ENCODE measurements at regions of chr15 and their contacts with region 1.

Region 1: GRCh38 chr15:74265046-74265639 is 29.0 kb downstream of the CCDC33 start:
- DNase-seq: peak; percentile 27 to 87
- H3K4me3 ChIP-seq: no peak overlapping the region
- H3K27ac ChIP-seq: no peak overlapping the region
- H3K4me1 ChIP-seq: peaks cover 7 to 15% (median 9%) of the 10 kb centered on the region in 4 experiments
- H3K27me3 ChIP-seq: peaks cover 0 to 8% (median 0%) of the 10 kb centered on the region in 4 experiments; a peak in 1 of 7 replicates
- CTCF ChIP-seq: no peak
- EP300 ChIP-seq: no peak
- POLR2A ChIP-seq: no peak
- RAD21 ChIP-seq: peak in 1 of 2 experiments; percentile 9; a peak in 1 of 4 replicates

Region 2: DNA sequence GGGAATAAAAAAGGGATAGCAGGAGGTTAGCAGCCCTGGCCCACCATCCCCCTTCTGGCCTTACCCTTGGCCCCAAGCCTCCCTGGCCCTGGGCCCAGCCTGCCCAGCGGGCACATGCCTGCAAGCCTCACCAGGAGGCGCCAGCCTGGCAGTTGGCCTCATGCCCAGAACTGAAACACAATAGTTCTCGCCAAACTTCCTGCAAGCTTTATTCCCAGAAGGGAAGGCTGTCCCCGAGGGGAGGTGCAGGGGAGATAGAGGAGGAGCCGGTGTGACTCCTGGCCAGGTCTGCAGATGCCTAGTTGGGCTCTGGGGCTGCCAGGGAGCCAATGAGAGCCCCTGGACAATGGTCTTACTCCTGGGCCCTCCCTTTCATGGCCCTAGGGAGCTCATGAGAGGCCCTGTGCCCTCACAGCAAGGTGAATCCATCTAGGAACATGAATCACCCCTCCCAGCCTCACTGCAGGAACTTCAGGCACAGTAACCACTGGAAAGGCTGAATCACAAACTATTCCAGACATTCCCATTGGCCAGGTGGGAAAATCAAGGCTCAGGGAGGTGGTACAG is 25.1 kb before region 1 on chr15:
- CTCF ChIA-PET with region 1: interaction called, 15 read pairs
- POLR2A ChIA-PET with region 1: interaction called, 11 read pairs
- DNase-seq: no peak
- H3K4me3 ChIP-seq: no peak overlapping the region
- H3K27ac ChIP-seq: no peak overlapping the region
- H3K4me1 ChIP-seq: peaks cover 0 to 26% (median 16%) of the 10 kb centered on the region in 4 experiments; a peak in 6 of 7 replicates
- H3K27me3 ChIP-seq: peaks cover 0 to 9% (median 2%) of the 10 kb centered on the region in 4 experiments; a peak in 4 of 7 replicates
- CTCF ChIP-seq: peak; percentile 28 to 47 (median 40)
- EP300 ChIP-seq: no peak
- POLR2A ChIP-seq: no peak
- RAD21 ChIP-seq: peak; percentile 31 to 51; a peak in 3 of 4 replicates

Region 3: GRCh38 chr15:74251131-74251811 is 13.9 kb before region 1 on chr15:
- CTCF ChIA-PET with region 1: interaction called, 34 read pairs
- POLR2A ChIA-PET with region 1: interaction called, 8 read pairs
- DNase-seq: no peak
- H3K4me3 ChIP-seq: no peak overlapping the region
- H3K27ac ChIP-seq: no peak overlapping the region
- H3K4me1 ChIP-seq: peaks cover 3 to 6% (median 5%) of the 10 kb centered on the region in 4 experiments
- H3K27me3 ChIP-seq: no peaks in the 10 kb centered on the region; a peak in 3 of 7 replicates
- CTCF ChIP-seq: no peak
- EP300 ChIP-seq: no peak
- POLR2A ChIP-seq: no peak
- RAD21 ChIP-seq: no peak